ENCODE measurements at regions of chr20 and their contacts with region 1.

Region 1: DNA sequence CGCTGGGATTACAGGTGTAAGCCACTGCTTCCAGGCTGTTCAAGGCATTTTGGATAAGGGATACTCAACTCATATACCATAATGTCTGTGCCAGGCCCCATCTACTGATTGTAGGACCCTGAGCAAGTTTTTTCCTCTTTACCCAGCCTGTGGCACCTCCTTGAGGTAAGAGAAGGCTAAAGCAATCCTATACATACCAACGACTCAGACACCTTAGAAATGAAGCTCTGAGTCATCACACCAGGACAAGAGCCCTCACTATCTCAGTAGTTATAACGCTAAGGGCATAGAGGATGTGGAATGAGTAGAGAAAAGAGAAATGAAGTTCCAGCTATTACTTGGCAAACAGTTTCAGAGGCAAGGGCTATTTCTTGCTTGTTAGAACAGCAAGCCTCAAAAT is 16.9 kb downstream of the NDRG3 start:
- DNase-seq: peak; percentile 36
- ATAC-seq: peak; percentile 63
- H3K4me3 Mint-ChIP-seq: no peak overlapping the region
- H3K27ac Mint-ChIP-seq: no peak overlapping the region
- H3K4me1 Mint-ChIP-seq: peaks cover 32% of the 10 kb centered on the region
- H3K27me3 Mint-ChIP-seq: no peaks in the 10 kb centered on the region

Region 2: DNA sequence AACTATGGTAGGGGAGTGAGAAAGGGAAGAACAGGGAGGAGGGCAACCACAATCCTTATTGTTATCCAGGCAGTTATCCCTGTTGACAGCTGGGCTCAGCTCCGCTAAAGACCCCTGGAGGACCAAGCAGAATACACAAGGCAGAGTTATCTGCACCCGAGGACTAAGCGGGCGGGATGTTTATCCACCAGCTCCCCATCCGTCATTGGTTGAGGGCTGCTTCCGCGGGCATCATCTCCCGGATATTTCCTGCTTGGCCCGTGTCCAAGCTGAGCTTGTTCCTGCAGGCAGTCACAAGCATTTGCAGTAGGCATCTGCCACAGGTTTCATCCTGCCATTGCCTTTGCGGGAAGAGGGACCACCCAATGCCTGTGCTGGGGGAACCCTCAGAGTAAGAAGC is 320.8 kb before region 1 on chr20:
- CTCF ChIA-PET with region 1: no interaction called
- POLR2A ChIA-PET with region 1: no interaction called
- DNase-seq: no peak
- ATAC-seq: no peak
- H3K4me3 Mint-ChIP-seq: no peak overlapping the region
- H3K27ac Mint-ChIP-seq: no peak overlapping the region
- H3K4me1 Mint-ChIP-seq: no peaks in the 10 kb centered on the region
- H3K27me3 Mint-ChIP-seq: peaks cover 1% of the 10 kb centered on the region

Region 3: GRCh38 chr20:36613974-36614373 is 115.0 kb before region 1 on chr20:
- CTCF ChIA-PET with region 1: interaction called, 11 read pairs
- POLR2A ChIA-PET with region 1: interaction called, 3 read pairs
- DNase-seq: no peak
- ATAC-seq: no peak
- H3K4me3 Mint-ChIP-seq: no peak overlapping the region
- H3K27ac Mint-ChIP-seq: peak overlapping the region; percentile 52
- H3K4me1 Mint-ChIP-seq: peaks cover 27% of the 10 kb centered on the region
- H3K27me3 Mint-ChIP-seq: no peaks in the 10 kb centered on the region

Region 4: DNA sequence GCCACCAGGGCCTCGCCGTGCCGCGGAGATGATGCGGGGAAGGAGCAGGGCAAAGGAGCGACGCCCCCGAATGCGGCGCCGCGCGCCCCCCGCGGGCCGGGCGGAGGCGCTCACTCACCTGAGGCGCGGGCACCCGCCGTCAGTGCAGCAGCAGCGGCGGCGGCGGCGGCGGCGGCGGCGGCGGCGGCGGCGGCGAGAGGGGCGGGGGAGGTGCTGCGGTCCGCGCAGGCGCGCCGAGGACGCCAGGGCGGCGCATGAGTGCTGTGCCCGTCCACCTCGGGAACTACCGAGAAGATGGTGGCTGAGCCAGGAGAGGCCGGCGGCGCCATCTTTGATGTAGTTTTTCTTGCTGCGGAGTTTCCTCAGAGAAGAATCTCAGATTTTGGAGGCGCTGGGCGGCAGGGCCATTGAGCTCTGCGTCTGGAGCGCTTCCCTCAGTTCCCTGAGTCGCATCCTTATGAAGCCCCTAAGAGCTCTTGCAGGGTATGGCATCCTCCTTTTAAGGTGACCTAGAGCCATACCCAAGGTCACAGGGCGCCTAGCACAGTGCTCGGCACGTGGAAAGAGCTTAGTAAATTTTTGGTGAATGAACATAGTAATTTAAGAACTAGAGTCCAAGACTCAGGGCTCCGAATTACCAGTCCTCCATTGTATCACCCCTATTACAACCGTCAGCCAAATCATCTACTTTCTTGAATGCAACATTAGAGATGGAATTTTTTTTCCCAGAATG is 17.1 kb after region 1 on chr20 and contains the start of gene NDRG3:
- CTCF ChIA-PET with region 1: interaction called, 46 read pairs
- POLR2A ChIA-PET with region 1: no interaction called
- DNase-seq: peak; percentile 96
- ATAC-seq: peak; percentile 98
- H3K4me3 Mint-ChIP-seq: peak within 1 kb of the TSS; percentile 91
- H3K27ac Mint-ChIP-seq: peak within 1 kb of the TSS; percentile 84
- H3K4me1 Mint-ChIP-seq: peaks cover 29% of the 10 kb centered on the region
- H3K27me3 Mint-ChIP-seq: peaks cover 2% of the 10 kb centered on the region
- total RNA-seq, gene NDRG3: 37.2 to 39.4 TPM

Region 5: GRCh38 chr20:36773597-36774390 is 44.8 kb after region 1 on chr20 and contains the start of gene DSN1:
- CTCF ChIA-PET with region 1: interaction called, 13 read pairs
- POLR2A ChIA-PET with region 1: no interaction called
- DNase-seq: peak; percentile 98
- ATAC-seq: peak; percentile 94
- H3K4me3 Mint-ChIP-seq: peak within 1 kb of the TSS; percentile 94
- H3K27ac Mint-ChIP-seq: peak within 1 kb of the TSS; percentile 96
- H3K4me1 Mint-ChIP-seq: peaks cover 41% of the 10 kb centered on the region
- H3K27me3 Mint-ChIP-seq: peaks cover 2% of the 10 kb centered on the region
- total RNA-seq, gene DSN1: 40.2 to 41.8 TPM

Measured in activated CD8-positive, alpha-beta T cell treated with anti-CD3 and anti-CD28 coated beads, Interleukin-2, amount 10 ng/mL, durations not matched to agents 7 days and 5 days (primary cell).